SK-N-SH (cell line): ENCODE measurements at regions of chr2 and their contacts with region 1.

Region 1: DNA sequence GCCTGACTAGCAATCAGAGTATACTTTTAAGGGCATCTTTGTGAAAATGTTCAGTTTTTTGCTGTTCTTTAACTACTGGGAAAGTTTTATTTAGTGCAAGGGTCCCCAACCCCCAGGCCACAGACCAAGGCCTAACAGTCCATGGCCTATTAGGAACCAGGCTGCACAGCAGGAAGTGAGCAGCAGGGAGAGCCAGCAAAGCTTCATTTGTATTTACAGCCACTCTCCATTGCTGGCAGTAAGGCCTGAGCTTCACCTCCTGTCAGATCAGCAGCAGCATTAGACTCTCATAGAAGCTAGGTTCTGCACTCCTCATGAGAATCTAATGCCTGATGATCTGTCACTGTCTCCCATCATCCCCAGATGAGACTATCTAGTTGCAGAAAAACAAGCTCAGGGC is 17.1 kb upstream of the NR4A2 start:
- DNase-seq: no peak
- H3K4me3 ChIP-seq: no peak overlapping the region
- H3K27ac ChIP-seq: no peak overlapping the region
- H3K4me1 ChIP-seq: no peaks in the 10 kb centered on the region
- H3K27me3 ChIP-seq: no peaks in the 10 kb centered on the region
- CTCF ChIP-seq: no peak
- EP300 ChIP-seq: no peak
- RAD21 ChIP-seq: no peak

Region 2: GRCh38 chr2:156332534-156333273 is 16.9 kb before region 1 on chr2 and contains the start of gene NR4A2:
- CTCF ChIA-PET with region 1: interaction called, 21 read pairs
- POLR2A ChIA-PET with region 1: no interaction called
- DNase-seq: peak; percentile 80
- H3K4me3 ChIP-seq: peak within 1 kb of the TSS; percentile 60 to 75
- H3K27ac ChIP-seq: peak within 1 kb of the TSS in 1 of 2 experiments; percentile 93; a peak in 1 of 4 replicates
- H3K4me1 ChIP-seq: peaks cover 6 to 19% of the 10 kb centered on the region in 2 experiments; a peak in 3 of 4 replicates
- H3K27me3 ChIP-seq: peaks cover 44% of the 10 kb centered on the region
- CTCF ChIP-seq: no peak
- EP300 ChIP-seq: no peak
- RAD21 ChIP-seq: no peak
- polyA plus RNA-seq, gene NR4A2: 13.9 and 16.2 TPM in 2 replicates

Region 3: DNA sequence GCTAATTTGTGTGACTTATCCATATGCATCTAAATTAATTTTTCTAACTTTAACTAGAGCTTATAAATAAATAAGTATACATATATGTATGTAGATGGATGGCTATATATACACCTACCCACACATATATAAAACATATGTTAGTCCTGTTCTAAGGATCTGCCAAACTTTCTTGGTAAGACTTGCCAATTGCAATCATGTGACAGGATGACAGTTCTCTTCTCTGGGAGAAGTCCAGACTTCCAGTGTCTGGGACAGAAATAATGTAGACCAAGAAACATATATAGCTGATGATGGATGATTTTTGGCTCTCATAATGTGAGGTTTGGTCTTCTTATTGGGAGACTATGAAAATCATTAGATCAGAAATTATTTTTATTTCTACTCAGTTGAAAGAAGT is 13.5 kb after region 1 on chr2:
- CTCF ChIA-PET with region 1: no interaction called
- POLR2A ChIA-PET with region 1: no interaction called
- DNase-seq: no peak
- H3K4me3 ChIP-seq: no peak overlapping the region
- H3K27ac ChIP-seq: no peak overlapping the region
- H3K4me1 ChIP-seq: no peaks in the 10 kb centered on the region
- H3K27me3 ChIP-seq: peaks cover 19% of the 10 kb centered on the region
- CTCF ChIP-seq: no peak
- EP300 ChIP-seq: no peak
- RAD21 ChIP-seq: no peak